ENCODE measurements at regions of chr3 and their contacts with region 1.

Region 1: GRCh38 chr3:9731206-9732079 is at the start of gene BRPF1:
- DNase-seq: peak; percentile 98 to 100 (median 99)
- ATAC-seq: peak; percentile 94
- H3K4me3 ChIP-seq: peak within 1 kb of the TSS; percentile 91 to 92
- H3K4me3 Mint-ChIP-seq: peak within 1 kb of the TSS; percentile 91
- H3K27ac ChIP-seq: peak within 1 kb of the TSS; percentile 83 to 97
- H3K27ac Mint-ChIP-seq: peak within 1 kb of the TSS; percentile 93
- H3K4me1 ChIP-seq: peaks cover 48% of the 10 kb centered on the region
- H3K4me1 Mint-ChIP-seq: peaks cover 66% of the 10 kb centered on the region
- H3K27me3 ChIP-seq: no peaks in the 10 kb centered on the region
- H3K27me3 Mint-ChIP-seq: no peaks in the 10 kb centered on the region
- CTCF ChIP-seq: no peak
- total RNA-seq, gene BRPF1: 22.0 to 25.8 TPM

Region 2: GRCh38 chr3:8970971-8971589 is 760.4 kb before region 1 on chr3:
- CTCF ChIA-PET with region 1: no interaction called
- POLR2A ChIA-PET with region 1: no interaction called
- intact Hi-C with region 1: loop called in 1 of 2 experiments (anchors 5 kb)
- DNase-seq: peak; percentile 49 to 82 (median 71)
- ATAC-seq: peak; percentile 97
- H3K4me3 ChIP-seq: no peak overlapping the region
- H3K4me3 Mint-ChIP-seq: no peak overlapping the region
- H3K27ac ChIP-seq: no peak overlapping the region
- H3K27ac Mint-ChIP-seq: no peak overlapping the region
- H3K4me1 ChIP-seq: no peaks in the 10 kb centered on the region
- H3K4me1 Mint-ChIP-seq: peaks cover 3% of the 10 kb centered on the region
- H3K27me3 ChIP-seq: no peaks in the 10 kb centered on the region
- H3K27me3 Mint-ChIP-seq: peaks cover 11% of the 10 kb centered on the region
- CTCF ChIP-seq: peak; percentile 99

Region 3: GRCh38 chr3:9503283-9503682 is 228.2 kb before region 1 on chr3:
- CTCF ChIA-PET with region 1: interaction called, 10 read pairs
- POLR2A ChIA-PET with region 1: no interaction called
- intact Hi-C with region 1: loop called (anchors 1 to 5 kb)
- DNase-seq: peak; percentile 45 to 79 (median 67)
- ATAC-seq: peak; percentile 68
- H3K4me3 ChIP-seq: no peak overlapping the region
- H3K4me3 Mint-ChIP-seq: no peak overlapping the region
- H3K27ac ChIP-seq: no peak overlapping the region
- H3K27ac Mint-ChIP-seq: no peak overlapping the region
- H3K4me1 ChIP-seq: peaks cover 14% of the 10 kb centered on the region
- H3K4me1 Mint-ChIP-seq: peaks cover 8% of the 10 kb centered on the region
- H3K27me3 ChIP-seq: peaks cover 17% of the 10 kb centered on the region in 2 experiments
- H3K27me3 Mint-ChIP-seq: peaks cover 37% of the 10 kb centered on the region
- CTCF ChIP-seq: peak; percentile 69

Region 4: GRCh38 chr3:9615003-9615625 is 116.3 kb before region 1 on chr3:
- CTCF ChIA-PET with region 1: no interaction called
- POLR2A ChIA-PET with region 1: no interaction called
- intact Hi-C with region 1: no loop called
- DNase-seq: no peak
- ATAC-seq: no peak
- H3K4me3 ChIP-seq: no peak overlapping the region
- H3K4me3 Mint-ChIP-seq: no peak overlapping the region
- H3K27ac ChIP-seq: no peak overlapping the region
- H3K27ac Mint-ChIP-seq: no peak overlapping the region
- H3K4me1 ChIP-seq: no peaks in the 10 kb centered on the region
- H3K4me1 Mint-ChIP-seq: no peaks in the 10 kb centered on the region
- H3K27me3 ChIP-seq: no peaks in the 10 kb centered on the region
- H3K27me3 Mint-ChIP-seq: peaks cover 31% of the 10 kb centered on the region
- CTCF ChIP-seq: no peak

Region 5: DNA sequence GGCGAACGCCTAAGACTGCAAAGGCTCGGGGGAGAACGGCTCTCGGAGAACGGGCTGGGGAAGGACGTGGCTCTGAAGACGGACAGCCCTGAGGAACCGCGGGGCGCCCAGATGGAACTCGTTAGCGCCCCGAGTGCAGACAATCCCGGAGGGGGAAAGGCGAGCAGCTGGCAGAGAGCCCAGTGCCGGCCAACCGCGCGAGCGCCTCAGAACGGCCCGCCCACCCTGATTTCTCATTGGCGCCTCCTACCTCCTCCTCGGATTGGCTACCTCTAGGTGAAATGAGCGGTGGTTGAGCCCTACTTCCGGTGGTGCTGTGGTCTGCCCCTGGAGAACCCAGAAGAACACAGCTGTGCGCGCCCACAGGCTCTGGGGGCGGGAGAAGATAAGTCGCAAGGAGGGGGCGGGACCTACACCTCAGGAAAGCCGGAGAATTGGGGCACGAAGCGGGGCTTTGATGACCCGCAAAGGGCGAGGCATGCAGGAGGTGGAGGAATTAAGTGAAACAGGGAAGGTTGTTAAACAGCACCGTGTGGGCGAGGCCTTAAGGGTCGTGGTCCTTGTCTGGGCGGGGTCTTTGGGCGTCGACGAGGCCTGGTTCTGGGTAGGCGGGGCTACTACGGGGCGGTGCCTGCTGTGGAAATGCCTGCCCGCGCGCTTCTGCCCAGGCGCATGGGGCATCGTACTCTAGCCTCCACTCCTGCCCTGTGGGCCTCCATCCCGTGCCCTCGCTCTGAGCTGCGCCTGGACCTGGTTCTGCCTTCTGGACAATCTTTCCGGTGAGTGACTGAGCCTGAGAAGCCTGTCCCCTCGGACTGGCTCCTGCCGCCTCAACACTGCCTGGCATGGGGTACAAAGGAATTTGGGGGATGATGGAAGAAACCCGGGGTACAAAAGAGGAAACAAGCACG is 18.5 kb after region 1 on chr3 and contains the start of gene OGG1:
- CTCF ChIA-PET with region 1: interaction called, 9 read pairs
- POLR2A ChIA-PET with region 1: interaction called, 22 read pairs
- intact Hi-C with region 1: loop called (anchors 1 kb)
- DNase-seq: peak; percentile 84 to 98 (median 95)
- ATAC-seq: peak; percentile 93
- H3K4me3 ChIP-seq: peak within 1 kb of the TSS; percentile 79 to 94
- H3K4me3 Mint-ChIP-seq: peak within 1 kb of the TSS; percentile 96
- H3K27ac ChIP-seq: peak within 1 kb of the TSS; percentile 50 to 52
- H3K27ac Mint-ChIP-seq: peak within 1 kb of the TSS; percentile 93
- H3K4me1 ChIP-seq: peaks cover 35% of the 10 kb centered on the region
- H3K4me1 Mint-ChIP-seq: peaks cover 44% of the 10 kb centered on the region
- H3K27me3 ChIP-seq: no peaks in the 10 kb centered on the region
- H3K27me3 Mint-ChIP-seq: no peaks in the 10 kb centered on the region
- CTCF ChIP-seq: no peak
- total RNA-seq, gene OGG1: 4.9 to 7.9 TPM

Region 6: DNA sequence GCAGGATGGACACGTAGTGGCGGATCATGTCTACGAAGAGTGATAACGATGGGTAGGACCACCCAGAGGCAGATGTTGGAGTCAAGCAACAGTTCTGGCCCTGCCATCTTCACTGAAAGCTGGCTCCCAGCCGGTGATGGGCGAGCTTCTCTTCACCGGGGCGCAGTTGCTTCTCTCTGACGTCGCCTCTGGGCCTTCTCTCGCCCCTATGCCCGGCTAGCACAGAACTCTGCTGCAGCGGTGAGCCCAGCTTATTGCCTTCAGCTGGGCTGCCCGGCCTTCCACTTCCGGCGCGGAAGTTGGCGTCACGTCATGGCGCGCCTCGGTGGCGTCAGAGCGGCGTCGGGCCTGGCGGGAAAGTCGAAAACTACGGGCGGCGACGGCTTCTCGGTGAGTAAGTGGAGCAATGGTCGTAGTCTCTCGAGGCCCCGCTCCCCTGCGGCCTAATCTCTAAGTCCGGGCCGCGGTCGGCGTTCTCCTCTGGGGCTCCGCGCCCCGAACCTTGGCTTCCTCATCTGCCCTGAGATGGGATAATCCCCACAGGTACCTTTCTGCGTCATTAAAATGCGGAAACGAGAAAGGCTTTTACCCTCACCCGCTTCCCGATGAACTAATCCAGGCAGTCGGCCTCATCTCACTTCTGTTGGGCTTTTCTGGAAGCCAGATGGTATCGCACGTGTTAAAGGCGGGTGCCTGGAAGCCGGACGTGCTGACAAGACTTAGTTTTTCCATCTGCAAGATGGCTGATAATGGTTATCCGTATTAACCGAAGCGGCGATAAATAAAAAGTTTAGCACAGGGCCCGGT is 294.8 kb after region 1 on chr3 and contains the start of gene FANCD2:
- CTCF ChIA-PET with region 1: no interaction called
- POLR2A ChIA-PET with region 1: no interaction called
- intact Hi-C with region 1: loop called in 1 of 2 experiments (anchors 1 kb)
- DNase-seq: peak; percentile 87 to 97 (median 93)
- ATAC-seq: peak; percentile 92
- H3K4me3 ChIP-seq: peak within 1 kb of the TSS; percentile 76 to 82
- H3K4me3 Mint-ChIP-seq: peak within 1 kb of the TSS; percentile 98
- H3K27ac ChIP-seq: peak within 1 kb of the TSS; percentile 84
- H3K27ac Mint-ChIP-seq: peak within 1 kb of the TSS; percentile 96
- H3K4me1 ChIP-seq: peaks cover 18% of the 10 kb centered on the region
- H3K4me1 Mint-ChIP-seq: peaks cover 27% of the 10 kb centered on the region
- H3K27me3 ChIP-seq: no peaks in the 10 kb centered on the region
- H3K27me3 Mint-ChIP-seq: no peaks in the 10 kb centered on the region
- CTCF ChIP-seq: no peak
- total RNA-seq, gene FANCD2: 15.8 to 17.7 TPM

Region 7: DNA sequence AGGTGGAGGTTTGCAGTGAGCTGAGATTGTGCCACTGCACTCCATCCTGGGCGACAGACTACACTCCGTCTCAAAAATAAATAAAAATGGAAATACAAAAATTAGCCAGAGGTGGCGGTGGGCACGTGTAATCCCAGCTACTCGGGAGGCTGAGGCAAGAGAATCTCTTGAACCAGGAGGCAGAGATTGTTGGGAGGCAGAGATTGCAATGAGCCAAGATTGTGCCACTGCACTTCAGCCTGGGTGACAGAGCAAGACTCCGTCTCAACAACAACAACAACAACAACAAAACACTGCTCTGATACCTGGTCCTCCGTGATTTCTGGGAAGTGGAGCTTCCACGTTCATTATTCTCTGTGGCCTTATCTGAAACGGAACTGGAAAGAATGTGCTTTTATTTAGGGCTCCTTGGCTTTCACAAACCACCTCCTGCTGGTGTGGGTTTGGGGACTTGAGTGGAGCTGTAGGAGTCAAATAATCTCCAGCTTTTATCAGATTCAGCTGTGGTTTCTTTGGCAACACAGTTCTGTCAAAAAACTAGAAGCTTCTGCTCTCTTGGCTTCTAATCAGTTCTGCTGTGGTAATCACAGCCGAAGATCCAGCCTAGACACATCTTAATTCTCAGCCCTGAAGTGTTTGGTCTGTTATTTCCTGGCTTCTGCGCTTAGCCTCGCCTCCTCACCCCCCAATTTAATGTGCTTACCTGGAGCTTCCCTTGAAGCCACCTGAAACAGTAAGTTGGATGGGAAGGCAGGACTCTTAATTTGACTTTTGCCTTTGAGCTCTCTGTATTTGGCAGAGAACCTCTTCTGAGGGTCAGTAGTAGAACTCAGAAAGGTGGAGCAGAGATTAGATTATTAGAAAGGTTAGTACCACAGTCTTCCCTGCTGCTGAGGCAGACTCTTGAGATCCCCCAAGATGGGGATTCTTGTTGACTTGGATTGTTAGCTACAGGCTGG is 454.6 kb after region 1 on chr3:
- CTCF ChIA-PET with region 1: no interaction called
- POLR2A ChIA-PET with region 1: no interaction called
- intact Hi-C with region 1: no loop called
- DNase-seq: peak in 3 of 9 experiments; percentile 33 to 69 (median 53)
- ATAC-seq: peak; percentile 74
- H3K4me3 ChIP-seq: no peak overlapping the region
- H3K4me3 Mint-ChIP-seq: peak overlapping the region; percentile 47
- H3K27ac ChIP-seq: peak overlapping the region in 1 of 2 experiments; percentile 77
- H3K27ac Mint-ChIP-seq: peak overlapping the region; percentile 92
- H3K4me1 ChIP-seq: peaks cover 46% of the 10 kb centered on the region
- H3K4me1 Mint-ChIP-seq: peaks cover 54% of the 10 kb centered on the region
- H3K27me3 ChIP-seq: no peaks in the 10 kb centered on the region
- H3K27me3 Mint-ChIP-seq: no peaks in the 10 kb centered on the region
- CTCF ChIP-seq: no peak